Common myeloid progenitor, CD34-positive (primary cell): ENCODE measurements at regions of chr11 and their contacts with region 1.

Region 1: DNA sequence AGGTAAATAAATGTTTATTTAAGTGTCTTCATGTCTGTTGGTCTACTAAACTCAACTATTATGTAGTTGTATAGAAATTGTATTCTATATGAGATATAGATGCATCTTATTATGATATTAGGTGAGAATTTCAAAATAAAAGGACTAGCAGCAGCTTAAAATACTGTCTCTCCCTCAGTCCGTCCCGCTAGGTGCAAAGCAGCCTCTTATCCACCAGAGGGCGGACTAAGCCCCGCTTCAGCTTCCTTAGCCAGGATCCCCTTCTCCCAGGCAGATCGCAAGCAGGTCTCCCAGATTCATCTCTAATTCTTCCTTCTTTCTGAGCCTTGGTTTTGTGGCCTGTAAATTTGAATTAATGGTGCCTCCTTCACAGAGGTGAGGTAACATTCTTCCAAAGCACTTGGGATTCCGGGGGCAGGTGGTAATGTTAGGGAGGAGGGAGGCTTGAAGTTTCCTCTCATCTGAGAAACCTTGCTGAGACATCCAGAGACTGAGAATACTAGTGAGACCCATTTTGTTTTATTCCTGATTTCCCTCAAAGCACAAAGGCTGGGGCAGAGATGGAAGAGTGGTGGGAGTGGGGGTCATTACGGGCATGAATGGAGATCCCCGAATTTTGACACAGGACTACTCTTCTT is 13.5 kb upstream of the INSC start:
- DNase-seq: peak; percentile 50 to 70 (median 58)
- H3K4me3 ChIP-seq: no peak overlapping the region
- H3K27ac ChIP-seq: no peak overlapping the region
- H3K4me1 ChIP-seq: peaks cover 0 to 8% (median 0%) of the 10 kb centered on the region in 4 experiments
- H3K27me3 ChIP-seq: peaks cover 0 to 16% (median 5%) of the 10 kb centered on the region in 5 experiments

Region 2: GRCh38 chr11:14980854-14981253 is 120.3 kb before region 1 on chr11:
- CTCF ChIA-PET with region 1: no interaction called
- POLR2A ChIA-PET with region 1: no interaction called
- DNase-seq: no peak
- H3K4me3 ChIP-seq: no peak overlapping the region
- H3K27ac ChIP-seq: no peak overlapping the region
- H3K4me1 ChIP-seq: no peaks in the 10 kb centered on the region
- H3K27me3 ChIP-seq: peaks cover 9 to 33% (median 19%) of the 10 kb centered on the region in 5 experiments

Region 3: DNA sequence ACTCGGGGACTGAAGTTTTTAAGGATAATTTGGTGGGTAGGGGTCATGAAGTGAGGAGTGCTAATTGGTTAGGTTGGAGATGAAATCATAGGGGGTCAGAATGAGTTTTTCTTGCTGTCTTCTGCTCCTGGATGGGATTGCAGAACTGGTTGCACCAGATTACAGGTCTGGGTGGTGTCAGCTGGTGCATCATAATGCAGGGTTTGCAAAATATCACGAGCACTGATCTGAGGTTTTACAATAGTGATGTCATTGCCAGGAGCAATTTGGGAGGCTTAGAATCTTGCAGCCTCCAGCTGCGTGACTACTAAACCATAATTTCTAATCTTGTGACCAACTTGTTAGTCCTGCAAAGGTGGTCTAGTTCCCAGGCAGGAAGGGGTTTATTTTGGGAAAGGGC is 74.2 kb before region 1 on chr11:
- CTCF ChIA-PET with region 1: no interaction called
- POLR2A ChIA-PET with region 1: no interaction called
- DNase-seq: no peak
- H3K4me3 ChIP-seq: no peak overlapping the region
- H3K27ac ChIP-seq: no peak overlapping the region
- H3K4me1 ChIP-seq: no peaks in the 10 kb centered on the region
- H3K27me3 ChIP-seq: peaks cover 0 to 4% (median 0%) of the 10 kb centered on the region in 5 experiments

Region 4: DNA sequence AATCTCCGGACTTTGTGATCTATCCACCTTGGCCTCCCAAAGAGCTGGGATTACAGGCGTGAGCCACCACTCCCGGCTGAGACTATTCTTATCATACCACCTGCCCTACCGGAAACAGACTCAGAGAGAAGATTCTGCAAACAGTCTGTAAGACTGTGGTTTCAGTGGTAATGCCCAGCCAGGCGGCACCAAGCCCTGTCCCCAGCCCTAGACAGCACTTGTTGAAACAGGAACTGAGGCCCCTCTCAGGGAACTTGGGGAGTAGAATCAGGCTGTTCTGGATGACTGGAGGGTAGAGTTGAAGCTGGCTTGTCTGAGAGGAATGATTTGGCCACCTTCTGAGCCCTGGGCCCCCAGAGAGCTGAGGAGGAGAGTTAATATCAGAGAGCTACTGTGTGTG is 12.2 kb after region 1 on chr11:
- CTCF ChIA-PET with region 1: interaction called, 89 read pairs
- POLR2A ChIA-PET with region 1: no interaction called
- DNase-seq: peak; percentile 82 to 97 (median 95)
- H3K4me3 ChIP-seq: peak overlapping the region in 1 of 7 experiments; percentile 1
- H3K27ac ChIP-seq: no peak overlapping the region
- H3K4me1 ChIP-seq: peaks cover 5 to 35% (median 17%) of the 10 kb centered on the region in 4 experiments
- H3K27me3 ChIP-seq: peaks cover 0 to 19% (median 6%) of the 10 kb centered on the region in 5 experiments

Region 5: DNA sequence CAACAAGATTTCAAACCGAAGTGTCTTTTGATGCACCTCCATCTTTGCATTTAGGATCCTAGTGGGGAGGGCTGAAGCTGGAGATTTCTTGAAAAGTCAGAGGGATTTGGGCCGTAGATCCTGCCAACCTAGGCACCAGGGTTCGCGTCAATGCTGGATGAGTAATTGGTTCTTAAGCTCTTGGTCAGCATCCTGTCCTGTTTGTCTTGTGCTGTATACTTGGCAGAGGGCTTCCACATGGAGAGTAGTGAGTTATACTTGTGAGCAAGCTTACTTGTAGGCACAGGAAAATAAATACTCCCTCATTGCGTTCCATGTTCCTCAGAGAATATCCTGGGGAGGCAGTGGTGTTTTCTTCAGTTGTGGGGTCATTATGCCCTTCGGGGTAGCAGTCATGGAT is 26.1 kb after region 1 on chr11:
- CTCF ChIA-PET with region 1: interaction called, 19 read pairs
- POLR2A ChIA-PET with region 1: no interaction called
- DNase-seq: no peak
- H3K4me3 ChIP-seq: no peak overlapping the region
- H3K27ac ChIP-seq: no peak overlapping the region
- H3K4me1 ChIP-seq: peaks cover 0 to 4% (median 0%) of the 10 kb centered on the region in 4 experiments
- H3K27me3 ChIP-seq: peaks cover 0 to 10% (median 3%) of the 10 kb centered on the region in 5 experiments

Region 6: GRCh38 chr11:15159085-15159484 is 57.9 kb after region 1 on chr11:
- CTCF ChIA-PET with region 1: interaction called, 47 read pairs
- POLR2A ChIA-PET with region 1: no interaction called
- DNase-seq: peak; percentile 15 to 38 (median 19)
- H3K4me3 ChIP-seq: no peak overlapping the region
- H3K27ac ChIP-seq: no peak overlapping the region
- H3K4me1 ChIP-seq: no peaks in the 10 kb centered on the region
- H3K27me3 ChIP-seq: peaks cover 0 to 2% (median 0%) of the 10 kb centered on the region in 5 experiments

Region 7: DNA sequence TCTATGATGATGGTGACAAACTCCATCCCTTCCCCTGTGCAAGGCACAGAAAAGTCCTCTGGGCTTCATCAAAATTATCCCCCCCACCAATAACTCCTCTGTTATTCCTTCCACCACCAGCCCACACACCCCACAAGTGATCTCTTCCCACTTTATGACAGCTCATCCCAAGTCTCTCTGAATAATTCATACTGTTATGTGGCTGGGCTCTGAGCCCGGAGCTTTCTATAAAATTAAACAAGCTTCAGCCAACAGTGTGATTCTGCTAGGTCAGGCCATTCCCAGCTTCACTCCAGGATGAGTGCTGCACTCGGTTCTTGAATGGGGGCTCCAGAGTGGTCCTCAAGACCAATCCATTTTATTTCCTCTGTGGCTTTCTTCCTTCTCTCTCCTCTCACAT is 96.5 kb after region 1 on chr11:
- CTCF ChIA-PET with region 1: interaction called, 13 read pairs
- POLR2A ChIA-PET with region 1: no interaction called
- DNase-seq: no peak
- H3K4me3 ChIP-seq: no peak overlapping the region
- H3K27ac ChIP-seq: no peak overlapping the region
- H3K4me1 ChIP-seq: no peaks in the 10 kb centered on the region
- H3K27me3 ChIP-seq: peaks cover 0 to 4% (median 0%) of the 10 kb centered on the region in 5 experiments

Region 8: DNA sequence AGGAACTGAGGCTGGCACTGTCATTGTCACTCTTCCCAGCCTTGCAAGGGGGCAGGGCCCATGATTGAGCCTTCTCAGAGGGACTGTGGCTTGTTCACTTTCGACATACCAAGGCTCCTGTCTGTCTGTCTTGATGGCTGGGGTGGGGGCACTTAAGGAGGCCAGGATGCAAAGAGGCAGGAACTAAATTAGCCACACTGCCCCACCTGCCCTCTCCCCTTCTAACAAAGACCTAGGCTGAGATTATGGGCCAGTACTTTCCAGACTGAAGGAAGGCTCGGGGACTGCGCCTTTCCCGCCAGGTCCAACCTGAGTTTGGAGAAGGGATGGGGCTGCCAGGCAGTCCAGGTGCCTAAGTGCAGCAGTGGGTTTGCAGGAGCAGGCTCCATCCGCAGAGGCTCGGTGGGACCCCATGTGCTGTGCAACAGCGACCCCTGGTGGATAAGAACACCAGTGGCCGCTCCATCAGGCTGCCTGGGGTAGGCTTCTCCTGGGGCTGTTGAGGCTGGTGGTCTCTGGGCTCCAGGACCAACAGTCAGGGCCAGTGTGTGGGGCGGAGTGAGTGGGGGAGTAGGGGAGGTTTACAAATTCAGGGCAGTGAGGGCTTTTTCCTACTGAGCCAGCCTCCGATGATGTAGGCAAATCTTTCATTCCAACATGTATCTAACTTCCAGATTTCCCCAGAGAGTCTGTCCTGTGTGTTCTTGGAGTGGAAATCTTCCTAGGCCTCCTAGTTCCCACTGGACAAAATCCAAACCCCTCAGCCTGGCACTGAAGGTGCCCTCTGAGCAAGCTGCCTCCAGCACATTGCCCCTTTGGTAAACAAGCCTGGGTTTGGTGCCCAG is 107.4 kb after region 1 on chr11:
- CTCF ChIA-PET with region 1: interaction called, 66 read pairs
- POLR2A ChIA-PET with region 1: no interaction called
- DNase-seq: peak; percentile 48 to 73 (median 66)
- H3K4me3 ChIP-seq: no peak overlapping the region
- H3K27ac ChIP-seq: no peak overlapping the region
- H3K4me1 ChIP-seq: no peaks in the 10 kb centered on the region
- H3K27me3 ChIP-seq: peaks cover 0 to 6% (median 3%) of the 10 kb centered on the region in 5 experiments